Caco-2 (cell line): ENCODE measurements at regions of chr6 and their contacts with region 1.

Region 1: DNA sequence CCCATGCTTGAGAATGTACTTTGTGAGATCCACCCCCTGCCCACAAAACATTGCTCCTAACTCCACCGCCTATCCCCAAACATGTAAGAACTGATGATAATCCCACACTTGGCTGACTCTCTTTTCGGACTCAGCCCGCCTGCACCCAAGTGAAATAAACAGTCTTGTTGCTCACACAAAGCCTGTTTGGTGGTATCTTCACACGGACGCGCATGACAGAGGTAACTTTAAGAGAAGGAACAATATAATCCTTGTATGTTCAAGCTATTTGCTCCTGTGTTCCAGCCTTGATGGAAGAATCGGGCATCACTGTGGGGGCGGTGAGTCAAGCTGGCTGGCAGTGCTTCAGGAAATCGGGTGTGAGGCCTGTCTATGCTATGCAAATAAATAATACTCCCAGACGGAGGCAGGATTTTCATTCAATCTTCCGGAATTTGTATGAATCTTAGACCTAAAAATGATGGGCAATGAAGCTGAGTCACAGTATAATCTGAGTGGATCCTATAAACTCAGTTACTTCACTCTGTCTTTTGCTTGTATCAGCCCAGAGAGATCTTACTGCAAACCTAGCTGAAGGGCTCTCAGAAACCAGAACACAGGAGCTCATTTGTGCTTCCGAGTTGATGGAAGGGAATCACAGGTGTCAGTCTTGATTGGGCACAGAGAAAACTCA is 45.2 kb upstream of the NT5E start:
- DNase-seq: peak in 1 of 2 experiments; percentile 17
- H3K4me3 ChIP-seq: no peak overlapping the region
- H3K4me3 Mint-ChIP-seq: peak overlapping the region; percentile 68
- H3K27ac Mint-ChIP-seq: peak overlapping the region; percentile 95
- H3K4me1 ChIP-seq: peaks cover 54% of the 10 kb centered on the region
- H3K4me1 Mint-ChIP-seq: peaks cover 47% of the 10 kb centered on the region
- H3K27me3 ChIP-seq: no peaks in the 10 kb centered on the region
- H3K27me3 Mint-ChIP-seq: no peaks in the 10 kb centered on the region
- CTCF ChIP-seq: no peak

Region 2: GRCh38 chr6:85390105-85390728 is 14.4 kb before region 1 on chr6:
- CTCF ChIA-PET with region 1: no interaction called
- POLR2A ChIA-PET with region 1: no interaction called
- intact Hi-C with region 1: loop called (anchors 1 kb)
- DNase-seq: peak in 1 of 2 experiments; percentile 66
- H3K4me3 ChIP-seq: no peak overlapping the region
- H3K4me3 Mint-ChIP-seq: no peak overlapping the region
- H3K27ac Mint-ChIP-seq: peak overlapping the region; percentile 42
- H3K4me1 ChIP-seq: peaks cover 38% of the 10 kb centered on the region
- H3K4me1 Mint-ChIP-seq: peaks cover 20% of the 10 kb centered on the region
- H3K27me3 ChIP-seq: no peaks in the 10 kb centered on the region
- H3K27me3 Mint-ChIP-seq: no peaks in the 10 kb centered on the region
- CTCF ChIP-seq: no peak

Region 3: GRCh38 chr6:85449818-85450759 is 45.5 kb after region 1 on chr6 and contains the start of gene NT5E:
- CTCF ChIA-PET with region 1: no interaction called
- POLR2A ChIA-PET with region 1: interaction called, 4 read pairs
- intact Hi-C with region 1: loop called (anchors 2 kb)
- DNase-seq: peak; percentile 53 to 71
- H3K4me3 ChIP-seq: peak within 1 kb of the TSS; percentile 61
- H3K4me3 Mint-ChIP-seq: peak within 1 kb of the TSS; percentile 85
- H3K27ac Mint-ChIP-seq: no peak within 1 kb of the TSS
- H3K4me1 ChIP-seq: no peaks in the 10 kb centered on the region
- H3K4me1 Mint-ChIP-seq: peaks cover 17% of the 10 kb centered on the region
- H3K27me3 ChIP-seq: no peaks in the 10 kb centered on the region
- H3K27me3 Mint-ChIP-seq: peaks cover 7% of the 10 kb centered on the region
- CTCF ChIP-seq: peak in 1 of 2 experiments; percentile 1
- total RNA-seq, gene NT5E: 1.0 and 1.5 TPM in 2 replicates